Posterior vena cava (tissue), 2 donors: ENCODE measurements at regions of chr5 and their contacts with region 1.

Region 1: GRCh38 chr5:75824323-75824722 is 107.1 kb upstream of the POC5 start:
- DNase-seq: no peak

Region 2: GRCh38 chr5:76457674-76458485 is 633.6 kb after region 1 on chr5:
- intact Hi-C with region 1: loop called in 1 of 2 experiments (anchors 10 kb)
- DNase-seq: no peak